Activated T-helper 1 cell treated with anti-CD3 and anti-CD28 coated beads, Interleukin-12 subunit alpha, Interleukin-12 subunit beta, Interleukin-2, Interleukin-4 antibody, amounts not matched to agents 30 ng/mL and 10 ng/mL and 1 ng/mL, durations not matched to agents 14 hours and 24 hours and 36 hours (primary cell): ENCODE measurements at regions of chr11 and their contacts with region 1.

Region 1: DNA sequence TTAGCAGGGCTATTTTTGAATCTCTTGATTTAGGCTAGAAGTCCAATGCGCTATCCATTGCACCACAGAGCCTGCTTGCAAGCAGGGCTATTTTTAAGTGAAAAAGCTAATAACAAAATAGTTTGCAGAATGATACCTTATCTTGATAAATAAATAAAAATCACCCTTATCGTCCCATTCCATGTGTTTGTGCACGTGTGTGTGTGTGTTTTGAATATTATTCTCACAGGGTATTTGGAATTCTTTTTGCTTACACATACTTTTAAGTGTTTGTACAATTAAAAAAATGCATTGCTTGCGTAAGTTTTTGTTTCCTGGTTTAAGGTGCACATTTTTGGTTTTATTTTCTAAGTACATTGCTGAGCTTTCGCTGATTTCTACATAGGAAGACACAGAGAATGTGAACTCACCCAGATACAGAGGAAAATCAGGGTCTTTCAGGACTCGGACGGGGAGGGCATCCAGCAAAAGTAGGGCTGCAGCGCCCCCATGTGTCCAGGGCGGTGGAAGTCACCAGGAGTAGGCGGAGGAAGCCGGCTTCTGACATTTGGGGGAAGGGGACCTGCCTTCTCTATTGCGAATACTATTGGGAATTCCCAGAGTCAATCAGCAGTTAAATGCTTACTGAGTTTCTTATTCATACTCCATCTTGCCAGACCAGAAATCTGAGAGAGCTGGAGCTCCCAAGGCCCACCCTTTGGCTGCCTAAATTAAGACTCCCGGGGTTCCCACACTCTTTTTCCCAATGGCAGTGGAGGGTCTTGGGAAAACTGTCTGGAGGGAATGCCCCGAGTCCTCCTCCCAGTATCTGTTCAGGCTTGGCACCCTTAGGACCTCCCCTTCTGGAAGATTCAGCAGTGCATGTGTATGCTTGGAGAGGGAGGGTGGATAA is 27.2 kb downstream of the SLC1A2 start:
- DNase-seq: peak; percentile 61
- H3K4me3 Mint-ChIP-seq: no peak overlapping the region
- H3K27ac Mint-ChIP-seq: no peak overlapping the region
- H3K4me1 Mint-ChIP-seq: peaks cover 26% of the 10 kb centered on the region
- H3K27me3 Mint-ChIP-seq: peaks cover 14% of the 10 kb centered on the region

Region 2: GRCh38 chr11:34840736-34841386 is 551.3 kb before region 1 on chr11:
- intact Hi-C with region 1: loop called (anchors 2 kb)
- DNase-seq: no peak
- H3K4me3 Mint-ChIP-seq: no peak overlapping the region
- H3K27ac Mint-ChIP-seq: no peak overlapping the region
- H3K4me1 Mint-ChIP-seq: no peaks in the 10 kb centered on the region
- H3K27me3 Mint-ChIP-seq: peaks cover 23% of the 10 kb centered on the region

Region 3: GRCh38 chr11:35013514-35014233 is 378.5 kb before region 1 on chr11:
- intact Hi-C with region 1: loop called (anchors 5 kb)
- DNase-seq: peak; percentile 47
- H3K4me3 Mint-ChIP-seq: peak overlapping the region; percentile 51
- H3K27ac Mint-ChIP-seq: peak overlapping the region; percentile 88
- H3K4me1 Mint-ChIP-seq: peaks cover 53% of the 10 kb centered on the region
- H3K27me3 Mint-ChIP-seq: peaks cover 9% of the 10 kb centered on the region

Region 4: DNA sequence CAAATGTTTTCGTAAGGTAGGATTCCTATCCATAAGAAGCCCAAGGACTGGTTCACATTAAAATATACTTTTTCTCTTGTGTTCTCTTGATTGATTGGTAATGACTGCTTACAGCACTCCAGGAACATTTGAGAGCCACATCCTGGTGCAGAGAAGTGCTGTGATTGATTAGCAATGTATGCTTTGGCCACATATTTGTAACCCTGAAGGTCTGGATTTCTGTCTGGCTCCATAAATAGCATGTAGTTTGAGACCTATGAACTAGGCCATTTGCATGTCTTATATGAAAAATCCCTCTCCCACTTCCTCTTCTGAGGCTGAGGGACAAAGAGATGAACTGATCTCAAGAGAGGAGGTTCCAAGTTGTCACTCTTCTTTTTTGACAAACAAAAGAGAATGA is 302.5 kb before region 1 on chr11:
- intact Hi-C with region 1: no loop called
- DNase-seq: no peak
- H3K4me3 Mint-ChIP-seq: no peak overlapping the region
- H3K27ac Mint-ChIP-seq: no peak overlapping the region
- H3K4me1 Mint-ChIP-seq: peaks cover 30% of the 10 kb centered on the region
- H3K27me3 Mint-ChIP-seq: no peaks in the 10 kb centered on the region

Region 5: GRCh38 chr11:35165423-35166368 is 226.5 kb before region 1 on chr11:
- intact Hi-C with region 1: loop called (anchors 1 kb)
- DNase-seq: peak; percentile 92
- H3K4me3 Mint-ChIP-seq: peak overlapping the region; percentile 63
- H3K27ac Mint-ChIP-seq: peak overlapping the region; percentile 97
- H3K4me1 Mint-ChIP-seq: peaks cover 100% of the 10 kb centered on the region
- H3K27me3 Mint-ChIP-seq: no peaks in the 10 kb centered on the region

Region 6: GRCh38 chr11:35257281-35257680 is 134.9 kb before region 1 on chr11:
- intact Hi-C with region 1: loop called (anchors 5 kb)
- DNase-seq: no peak
- H3K4me3 Mint-ChIP-seq: no peak overlapping the region
- H3K27ac Mint-ChIP-seq: no peak overlapping the region
- H3K4me1 Mint-ChIP-seq: peaks cover 25% of the 10 kb centered on the region
- H3K27me3 Mint-ChIP-seq: peaks cover 31% of the 10 kb centered on the region